PC-3 (cell line): ENCODE measurements at regions of chr19 and their contacts with region 1.

Region 1: GRCh38 chr19:15629003-15629880 is 11.5 kb upstream of the CYP4F3 start:
- DNase-seq: peak; percentile 80
- ATAC-seq: peak; percentile 87
- H3K4me3 ChIP-seq: no peak overlapping the region
- H3K27ac ChIP-seq: no peak overlapping the region
- H3K4me1 ChIP-seq: no peaks in the 10 kb centered on the region
- H3K27me3 ChIP-seq: 0 out of 2 replicates have a peak, but pooled peaks cover under 1% of the 10 kb centered on the region
- CTCF ChIP-seq: peak; percentile 96

Region 2: GRCh38 chr19:15748239-15748638 is 119.0 kb after region 1 on chr19:
- CTCF ChIA-PET with region 1: no interaction called
- POLR2A ChIA-PET with region 1: no interaction called
- intact Hi-C with region 1: no loop called
- DNase-seq: no peak
- ATAC-seq: no peak
- H3K4me3 ChIP-seq: no peak overlapping the region
- H3K27ac ChIP-seq: no peak overlapping the region
- H3K4me1 ChIP-seq: no peaks in the 10 kb centered on the region
- H3K27me3 ChIP-seq: peaks cover 56% of the 10 kb centered on the region
- CTCF ChIP-seq: no peak

Region 3: DNA sequence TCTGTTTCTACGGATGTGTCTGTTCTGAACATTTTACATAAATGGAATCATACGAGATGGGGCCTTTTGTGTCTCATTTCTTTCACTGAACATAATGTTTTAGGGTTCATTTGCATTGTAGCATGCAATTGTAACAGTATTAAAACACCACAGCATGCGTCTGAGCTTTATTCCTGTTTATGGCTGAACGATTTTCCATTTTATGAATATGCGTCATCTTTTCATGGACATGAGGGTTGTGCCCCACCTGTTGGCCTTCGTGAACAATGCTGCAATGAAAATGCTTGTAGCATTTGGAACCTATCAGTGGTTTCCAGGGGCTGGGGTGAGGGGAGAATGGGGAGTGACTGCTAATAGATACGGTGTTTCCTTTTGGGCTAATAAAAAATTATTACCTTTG is 181.1 kb after region 1 on chr19:
- CTCF ChIA-PET with region 1: no interaction called
- POLR2A ChIA-PET with region 1: no interaction called
- intact Hi-C with region 1: loop called (anchors 1 kb)
- DNase-seq: peak; percentile 81
- ATAC-seq: peak; percentile 70
- H3K4me3 ChIP-seq: peak overlapping the region; percentile 36
- H3K27ac ChIP-seq: no peak overlapping the region
- H3K4me1 ChIP-seq: no peaks in the 10 kb centered on the region
- H3K27me3 ChIP-seq: no peaks in the 10 kb centered on the region
- CTCF ChIP-seq: peak; percentile 77

Region 4: DNA sequence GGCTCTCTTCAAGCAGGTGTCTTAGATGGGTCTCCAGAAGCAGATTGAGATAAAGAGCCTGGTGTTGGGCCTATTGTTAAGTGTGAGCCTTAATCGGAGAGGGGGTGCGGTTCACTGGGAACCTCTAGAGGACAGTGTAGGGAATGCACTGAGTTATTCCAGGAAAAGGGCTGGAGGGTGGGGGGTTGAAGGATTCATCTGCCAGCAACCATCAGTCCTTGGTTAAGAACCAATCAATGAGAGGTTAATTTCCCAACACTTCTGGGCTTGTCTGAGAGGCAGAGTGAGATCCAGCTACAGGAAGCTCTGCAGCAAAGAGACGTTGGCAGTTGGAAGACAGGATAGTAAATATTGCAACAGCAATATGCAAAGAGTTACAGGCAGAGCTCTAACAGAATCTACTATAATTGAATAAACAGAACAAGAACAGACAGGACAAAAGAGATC is 239.9 kb after region 1 on chr19:
- CTCF ChIA-PET with region 1: no interaction called
- POLR2A ChIA-PET with region 1: no interaction called
- intact Hi-C with region 1: loop called (anchors 2 kb)
- DNase-seq: peak; percentile 69
- ATAC-seq: peak; percentile 84
- H3K4me3 ChIP-seq: no peak overlapping the region
- H3K27ac ChIP-seq: no peak overlapping the region
- H3K4me1 ChIP-seq: peaks cover 4% of the 10 kb centered on the region
- H3K27me3 ChIP-seq: no peaks in the 10 kb centered on the region
- CTCF ChIP-seq: peak; percentile 77

Region 5: GRCh38 chr19:16025108-16026101 is 396.2 kb after region 1 on chr19:
- CTCF ChIA-PET with region 1: no interaction called
- POLR2A ChIA-PET with region 1: no interaction called
- intact Hi-C with region 1: loop called (anchors 10 kb)
- DNase-seq: peak; percentile 71
- ATAC-seq: peak; percentile 99
- H3K4me3 ChIP-seq: no peak overlapping the region
- H3K27ac ChIP-seq: no peak overlapping the region
- H3K4me1 ChIP-seq: no peaks in the 10 kb centered on the region
- H3K27me3 ChIP-seq: no peaks in the 10 kb centered on the region
- CTCF ChIP-seq: peak; percentile 72